CD8-positive, alpha-beta T cell (primary cell): ENCODE measurements at regions of chr19 and their contacts with region 1.

Region 1: GRCh38 chr19:3075895-3076431 is 13.7 kb upstream of the TLE5 start:
- DNase-seq: peak; percentile 58 to 89 (median 79)
- ATAC-seq: peak; percentile 100
- H3K4me3 ChIP-seq: no peak overlapping the region
- H3K4me3 Mint-ChIP-seq: no peak overlapping the region
- H3K27ac ChIP-seq: no peak overlapping the region
- H3K27ac Mint-ChIP-seq: no peak overlapping the region
- H3K4me1 ChIP-seq: peaks cover 10% of the 10 kb centered on the region
- H3K4me1 Mint-ChIP-seq: peaks cover 2% of the 10 kb centered on the region
- H3K27me3 ChIP-seq: no peaks in the 10 kb centered on the region
- H3K27me3 Mint-ChIP-seq: no peaks in the 10 kb centered on the region
- CTCF ChIP-seq: peak; percentile 85

Region 2: DNA sequence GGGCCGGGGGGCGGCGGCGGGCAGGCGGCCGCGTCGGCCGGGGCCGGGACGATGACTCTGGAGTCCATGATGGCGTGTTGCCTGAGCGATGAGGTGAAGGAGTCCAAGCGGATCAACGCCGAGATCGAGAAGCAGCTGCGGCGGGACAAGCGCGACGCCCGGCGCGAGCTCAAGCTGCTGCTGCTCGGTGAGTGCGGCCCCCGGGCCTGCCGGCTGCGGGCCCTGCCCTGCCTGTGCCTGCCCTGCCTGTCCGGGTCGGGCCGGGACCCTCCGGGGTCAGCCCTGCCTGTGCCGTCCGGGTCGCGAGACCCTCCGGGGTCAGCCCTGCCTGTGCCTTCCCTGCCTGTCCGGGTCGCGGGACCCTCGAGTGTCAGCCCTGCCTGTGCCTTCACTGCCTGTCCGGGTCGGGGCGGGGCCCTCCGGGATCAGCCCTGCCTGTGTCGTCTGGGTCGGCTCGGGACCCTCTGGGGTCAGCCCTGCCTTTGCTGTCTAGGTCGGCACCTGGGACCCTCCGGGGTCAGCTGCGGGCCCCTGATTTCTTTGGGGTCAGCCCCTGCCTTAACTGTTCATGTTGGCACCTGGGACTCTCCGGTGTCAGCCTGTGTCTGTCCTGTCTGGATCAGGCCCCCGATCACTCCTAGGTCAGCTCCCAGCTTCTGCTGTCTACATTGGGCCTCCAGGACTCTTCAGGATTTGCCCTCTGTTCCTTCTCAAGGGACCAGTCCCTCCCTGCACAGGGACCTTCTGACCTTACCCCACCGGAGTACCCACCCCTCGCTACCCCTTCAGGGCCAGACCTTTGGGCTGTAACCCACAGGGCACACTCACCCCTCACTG is 18.9 kb after region 1 on chr19:
- CTCF ChIA-PET with region 1: interaction called, 229 read pairs
- POLR2A ChIA-PET with region 1: interaction called, 3 read pairs
- intact Hi-C with region 1: no loop called
- DNase-seq: peak in 4 of 9 experiments; percentile 43 to 59 (median 58)
- ATAC-seq: peak; percentile 6
- H3K4me3 ChIP-seq: peak overlapping the region; percentile 34 to 62
- H3K4me3 Mint-ChIP-seq: peak overlapping the region; percentile 77
- H3K27ac ChIP-seq: no peak overlapping the region
- H3K27ac Mint-ChIP-seq: peak overlapping the region; percentile 60
- H3K4me1 ChIP-seq: peaks cover 42% of the 10 kb centered on the region
- H3K4me1 Mint-ChIP-seq: peaks cover 24% of the 10 kb centered on the region
- H3K27me3 ChIP-seq: peaks cover 0 to 20% of the 10 kb centered on the region in 2 experiments
- H3K27me3 Mint-ChIP-seq: peaks cover 6% of the 10 kb centered on the region
- CTCF ChIP-seq: no peak

Region 3: GRCh38 chr19:3163230-3163886 is 87.4 kb after region 1 on chr19:
- CTCF ChIA-PET with region 1: interaction called, 5 read pairs
- POLR2A ChIA-PET with region 1: no interaction called
- intact Hi-C with region 1: loop called (anchors 1 kb)
- DNase-seq: peak; percentile 46 to 85 (median 75)
- ATAC-seq: peak; percentile 97
- H3K4me3 ChIP-seq: no peak overlapping the region
- H3K4me3 Mint-ChIP-seq: no peak overlapping the region
- H3K27ac ChIP-seq: no peak overlapping the region
- H3K27ac Mint-ChIP-seq: peak overlapping the region; percentile 14
- H3K4me1 ChIP-seq: no peaks in the 10 kb centered on the region
- H3K4me1 Mint-ChIP-seq: peaks cover 14% of the 10 kb centered on the region
- H3K27me3 ChIP-seq: no peaks in the 10 kb centered on the region
- H3K27me3 Mint-ChIP-seq: no peaks in the 10 kb centered on the region
- CTCF ChIP-seq: peak; percentile 89

Region 4: DNA sequence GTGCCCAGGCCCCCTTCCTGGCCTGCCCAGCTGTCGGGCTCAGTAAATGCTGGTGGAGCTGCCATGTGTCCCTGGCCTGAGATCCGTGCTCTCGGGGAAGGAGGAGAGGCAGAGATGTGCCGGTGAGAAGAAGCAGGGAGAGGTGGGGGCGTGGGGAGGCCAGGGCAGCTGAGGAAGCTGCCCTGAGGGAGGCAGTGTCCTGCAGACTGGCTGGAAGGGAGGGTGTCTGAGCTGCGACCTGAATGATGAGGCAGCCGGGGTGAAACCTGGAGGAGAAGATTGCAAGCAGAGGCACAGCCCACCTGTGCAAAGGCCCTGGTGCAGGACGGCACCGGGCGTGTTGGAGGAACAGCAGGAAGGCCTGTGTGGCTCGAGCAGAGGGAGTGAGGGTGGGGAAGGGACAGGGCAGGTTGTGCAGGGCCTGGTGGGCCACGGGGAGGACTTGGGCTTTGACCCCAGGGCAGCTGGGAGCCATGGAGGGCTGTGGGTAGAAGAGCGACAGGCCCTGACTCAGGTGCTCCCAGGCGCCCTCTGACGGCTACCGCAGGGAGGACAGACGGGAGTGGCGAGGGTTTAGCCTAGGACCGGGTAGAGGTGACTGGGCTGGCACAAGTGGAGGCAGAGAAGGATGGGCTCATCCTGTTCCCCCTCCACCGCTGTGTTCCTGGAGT is 134.5 kb after region 1 on chr19:
- CTCF ChIA-PET with region 1: no interaction called
- POLR2A ChIA-PET with region 1: no interaction called
- intact Hi-C with region 1: loop called in 1 of 2 experiments (anchors 5 kb)
- DNase-seq: peak; percentile 54 to 80 (median 68)
- ATAC-seq: peak; percentile 97
- H3K4me3 ChIP-seq: no peak overlapping the region
- H3K4me3 Mint-ChIP-seq: no peak overlapping the region
- H3K27ac ChIP-seq: no peak overlapping the region
- H3K27ac Mint-ChIP-seq: no peak overlapping the region
- H3K4me1 ChIP-seq: no peaks in the 10 kb centered on the region
- H3K4me1 Mint-ChIP-seq: no peaks in the 10 kb centered on the region
- H3K27me3 ChIP-seq: no peaks in the 10 kb centered on the region
- H3K27me3 Mint-ChIP-seq: no peaks in the 10 kb centered on the region
- CTCF ChIP-seq: peak; percentile 59

Region 5: DNA sequence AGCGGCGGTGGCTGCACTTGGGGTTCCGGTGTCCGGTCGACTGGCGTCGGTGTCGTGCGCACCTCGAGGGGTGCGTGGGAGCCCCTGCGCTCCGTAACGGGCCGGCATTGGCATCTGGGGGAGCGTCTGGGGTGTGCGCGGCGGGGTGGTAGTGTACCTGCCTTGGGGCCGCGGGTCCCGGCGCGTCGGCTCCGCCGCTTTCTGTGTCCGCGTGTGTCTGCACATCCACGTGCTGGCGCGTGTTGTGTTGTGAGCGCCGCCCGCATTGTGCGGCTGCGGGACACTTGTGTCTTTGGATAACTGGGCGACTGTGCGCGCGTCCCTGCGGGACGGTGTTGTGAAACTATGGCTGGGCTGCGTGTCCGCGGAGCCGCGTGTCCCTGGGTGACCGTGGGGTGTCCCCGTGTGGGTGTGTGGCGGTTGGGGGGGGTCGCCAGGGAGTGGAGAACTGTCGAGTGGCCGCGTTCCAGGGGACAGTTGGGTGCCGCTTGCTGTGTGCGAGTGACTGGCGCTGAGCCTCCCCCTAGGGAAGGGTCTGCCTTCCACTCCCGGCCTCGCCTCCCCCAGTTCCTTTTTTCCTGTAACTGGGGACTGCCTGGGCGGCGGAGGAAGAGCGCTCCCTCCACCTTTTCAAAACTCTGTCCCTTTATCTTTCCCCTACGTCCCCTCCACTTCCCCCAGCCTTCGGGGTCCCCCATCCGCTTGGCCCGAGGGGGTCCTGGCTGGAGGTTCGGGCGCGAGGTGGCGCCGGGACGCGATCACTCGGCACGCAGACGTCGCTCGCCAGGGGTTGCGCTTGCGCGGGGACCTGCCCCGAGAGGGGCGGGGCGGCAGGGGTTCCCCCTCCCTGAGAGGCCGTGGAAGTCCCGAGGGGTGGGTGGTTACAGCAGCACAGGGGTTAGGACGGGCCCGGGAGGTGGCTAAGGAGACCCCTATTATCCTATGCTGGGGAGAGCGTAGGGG is 284.7 kb after region 1 on chr19:
- CTCF ChIA-PET with region 1: no interaction called
- POLR2A ChIA-PET with region 1: no interaction called
- intact Hi-C with region 1: no loop called
- DNase-seq: peak; percentile 35 to 90 (median 74)
- ATAC-seq: peak; percentile 55
- H3K4me3 ChIP-seq: peak overlapping the region; percentile 66 to 69
- H3K4me3 Mint-ChIP-seq: peak overlapping the region; percentile 90
- H3K27ac ChIP-seq: peak overlapping the region; percentile 38 to 63
- H3K27ac Mint-ChIP-seq: peak overlapping the region; percentile 91
- H3K4me1 ChIP-seq: peaks cover 31% of the 10 kb centered on the region
- H3K4me1 Mint-ChIP-seq: peaks cover 57% of the 10 kb centered on the region
- H3K27me3 ChIP-seq: no peaks in the 10 kb centered on the region
- H3K27me3 Mint-ChIP-seq: no peaks in the 10 kb centered on the region
- CTCF ChIP-seq: no peak